CD4-positive, alpha-beta memory T cell (primary cell): ENCODE measurements at regions of chr13 and their contacts with region 1.

Region 1: DNA sequence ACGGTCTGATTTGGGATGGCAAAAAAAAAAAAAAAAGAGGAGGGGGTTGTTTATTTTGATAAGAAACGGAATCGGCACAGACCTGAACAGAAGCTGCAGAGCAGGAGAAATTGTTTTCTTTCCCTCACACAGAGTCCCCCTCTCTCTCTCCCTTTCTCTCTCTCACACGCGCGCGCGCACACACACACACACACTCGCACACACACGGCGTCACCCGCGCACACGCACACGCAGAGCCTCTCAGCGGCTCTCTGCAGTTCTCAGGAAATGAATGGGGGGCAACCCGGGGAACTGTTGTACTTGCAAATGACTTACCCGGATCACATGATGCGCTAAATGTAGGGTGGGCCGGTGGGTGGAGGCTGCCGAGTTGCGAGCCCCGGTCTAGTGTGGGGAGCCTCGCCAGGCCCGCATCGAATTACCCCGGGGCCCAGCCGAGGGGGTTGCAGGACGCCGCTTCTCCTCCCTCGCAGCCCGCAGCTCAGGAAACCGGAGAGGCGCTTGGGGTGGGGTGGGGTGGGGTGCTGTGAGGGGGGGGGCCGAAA is 475 bp downstream of the KLF12 start:
- DNase-seq: peak; percentile 89 to 98 (median 95)
- H3K4me3 ChIP-seq: peak overlapping the region; percentile 86 to 90
- H3K4me3 Mint-ChIP-seq: peak overlapping the region; percentile 96 to 100 (median 98)
- H3K27ac ChIP-seq: peak overlapping the region; percentile 94
- H3K27ac Mint-ChIP-seq: peak overlapping the region; percentile 97 to 100 (median 99)
- H3K4me1 ChIP-seq: peaks cover 41% of the 10 kb centered on the region
- H3K4me1 Mint-ChIP-seq: peaks cover 22 to 49% (median 28%) of the 10 kb centered on the region in 4 donors
- H3K27me3 ChIP-seq: no peaks in the 10 kb centered on the region
- H3K27me3 Mint-ChIP-seq: peaks cover 1 to 3% of the 10 kb centered on the region in 2 donors

Region 2: DNA sequence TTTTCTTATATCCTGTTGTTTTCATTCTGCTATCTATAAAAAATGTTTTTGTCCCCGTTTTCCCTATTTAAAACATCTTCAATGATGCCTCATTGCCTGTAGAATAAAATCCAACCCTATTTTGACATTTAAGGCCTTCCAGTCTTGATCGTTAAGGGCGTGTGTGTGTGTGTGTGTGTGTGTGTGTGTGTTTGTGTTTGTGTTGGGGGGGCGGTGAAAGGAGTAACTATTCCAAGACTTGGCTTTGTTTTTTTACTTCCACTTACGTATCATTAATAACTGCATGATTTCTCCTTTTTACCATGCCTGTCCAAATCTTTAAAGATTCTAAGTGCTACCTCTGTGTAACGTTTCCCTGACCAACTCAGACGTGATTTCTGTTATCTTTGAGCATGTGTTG is 1351.0 kb before region 1 on chr13:
- CTCF ChIA-PET with region 1: no interaction called
- POLR2A ChIA-PET with region 1: no interaction called
- intact Hi-C with region 1: no loop called
- DNase-seq: peak in 4 of 5 donors; percentile 1 to 39 (median 14)
- H3K4me3 ChIP-seq: peak overlapping the region; percentile 92 to 96
- H3K4me3 Mint-ChIP-seq: peak overlapping the region; percentile 99 to 100 (median 100)
- H3K27ac ChIP-seq: peak overlapping the region; percentile 84
- H3K27ac Mint-ChIP-seq: peak overlapping the region; percentile 90 to 100 (median 99)
- H3K4me1 ChIP-seq: peaks cover 73% of the 10 kb centered on the region
- H3K4me1 Mint-ChIP-seq: peaks cover 39 to 78% (median 59%) of the 10 kb centered on the region in 4 donors
- H3K27me3 ChIP-seq: no peaks in the 10 kb centered on the region
- H3K27me3 Mint-ChIP-seq: no peaks in the 10 kb centered on the region

Region 3: GRCh38 chr13:73765651-73766384 is 367.9 kb before region 1 on chr13:
- CTCF ChIA-PET with region 1: no interaction called
- POLR2A ChIA-PET with region 1: interaction called, 31 read pairs
- intact Hi-C with region 1: loop called (anchors 2 kb)
- DNase-seq: peak; percentile 73 to 93 (median 78)
- H3K4me3 ChIP-seq: peak overlapping the region; percentile 14 to 40
- H3K4me3 Mint-ChIP-seq: peak overlapping the region; percentile 78 to 92 (median 84)
- H3K27ac ChIP-seq: peak overlapping the region; percentile 47
- H3K27ac Mint-ChIP-seq: peak overlapping the region; percentile 96 to 99 (median 96)
- H3K4me1 ChIP-seq: peaks cover 84% of the 10 kb centered on the region
- H3K4me1 Mint-ChIP-seq: peaks cover 72 to 86% (median 80%) of the 10 kb centered on the region in 4 donors
- H3K27me3 ChIP-seq: no peaks in the 10 kb centered on the region
- H3K27me3 Mint-ChIP-seq: no peaks in the 10 kb centered on the region

Region 4: DNA sequence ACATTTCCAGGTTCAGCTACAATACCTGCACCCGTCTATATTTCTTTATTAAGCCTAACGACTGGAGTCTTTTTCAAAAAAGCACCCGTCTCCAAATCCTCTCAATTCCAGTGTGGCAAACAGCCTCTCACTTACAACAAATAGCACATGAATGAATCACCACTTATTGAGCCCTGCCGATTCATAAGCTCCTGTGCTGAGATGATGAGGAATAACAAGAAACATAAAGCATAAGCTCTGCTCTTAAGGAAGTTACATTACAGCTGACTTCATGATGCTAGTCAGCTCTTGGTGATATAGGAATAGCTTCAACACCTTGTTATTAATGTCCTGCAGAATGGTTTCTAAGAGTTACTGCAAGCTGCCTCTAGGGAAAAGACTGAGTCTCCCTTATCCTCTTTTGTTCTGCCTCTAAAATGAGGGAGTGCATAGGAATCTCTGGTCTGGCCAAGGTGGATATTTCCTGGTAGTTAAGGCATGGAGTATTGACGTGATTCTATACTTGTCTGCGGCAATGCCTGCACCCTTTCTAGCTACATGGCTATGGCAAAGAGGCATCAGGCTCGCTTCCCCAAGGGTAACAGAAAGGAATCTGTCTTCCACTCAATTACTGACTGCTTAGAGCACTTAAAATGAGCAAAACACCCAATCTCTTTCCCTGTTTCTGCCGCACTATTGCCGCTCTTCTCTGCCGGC is 195.2 kb before region 1 on chr13:
- CTCF ChIA-PET with region 1: no interaction called
- POLR2A ChIA-PET with region 1: interaction called, 5 read pairs
- intact Hi-C with region 1: loop called (anchors 5 kb)
- DNase-seq: no peak
- H3K4me3 ChIP-seq: no peak overlapping the region
- H3K4me3 Mint-ChIP-seq: no peak overlapping the region
- H3K27ac ChIP-seq: no peak overlapping the region
- H3K27ac Mint-ChIP-seq: peak overlapping the region in 4 of 7 donors; percentile 8 to 46 (median 28)
- H3K4me1 ChIP-seq: peaks cover 44% of the 10 kb centered on the region
- H3K4me1 Mint-ChIP-seq: peaks cover 61 to 88% (median 76%) of the 10 kb centered on the region in 4 donors
- H3K27me3 ChIP-seq: no peaks in the 10 kb centered on the region
- H3K27me3 Mint-ChIP-seq: no peaks in the 10 kb centered on the region

Region 5: DNA sequence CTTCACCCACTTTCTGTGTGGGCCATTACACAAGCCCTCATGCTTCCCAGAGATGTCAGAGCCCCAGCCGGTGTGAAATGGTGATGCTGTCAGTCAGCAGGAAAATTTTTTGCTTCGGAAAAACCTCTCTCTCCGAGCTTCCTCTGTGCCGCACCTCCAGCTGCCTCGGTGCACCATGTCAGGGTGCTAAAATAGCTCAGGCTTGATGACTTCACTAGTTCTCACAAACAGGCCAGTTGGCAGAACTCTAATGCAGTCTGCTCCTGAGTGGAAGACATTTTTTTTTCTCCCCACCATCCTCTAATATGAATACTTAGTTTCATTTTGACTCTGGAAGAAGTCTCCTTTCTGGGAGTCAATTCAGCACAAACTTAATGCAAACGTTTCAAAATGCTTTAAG is 70.8 kb before region 1 on chr13:
- CTCF ChIA-PET with region 1: interaction called, 13 read pairs
- POLR2A ChIA-PET with region 1: interaction called, 52 read pairs
- intact Hi-C with region 1: loop called (anchors 1 kb)
- DNase-seq: peak in 1 of 5 donors; percentile 70
- H3K4me3 ChIP-seq: peak overlapping the region in 1 of 2 donors; percentile 7
- H3K4me3 Mint-ChIP-seq: peak overlapping the region; percentile 57 to 93 (median 83)
- H3K27ac ChIP-seq: peak overlapping the region; percentile 48
- H3K27ac Mint-ChIP-seq: peak overlapping the region; percentile 81 to 98 (median 93)
- H3K4me1 ChIP-seq: peaks cover 93% of the 10 kb centered on the region
- H3K4me1 Mint-ChIP-seq: peaks cover 59 to 93% (median 86%) of the 10 kb centered on the region in 4 donors
- H3K27me3 ChIP-seq: no peaks in the 10 kb centered on the region
- H3K27me3 Mint-ChIP-seq: no peaks in the 10 kb centered on the region

Region 6: DNA sequence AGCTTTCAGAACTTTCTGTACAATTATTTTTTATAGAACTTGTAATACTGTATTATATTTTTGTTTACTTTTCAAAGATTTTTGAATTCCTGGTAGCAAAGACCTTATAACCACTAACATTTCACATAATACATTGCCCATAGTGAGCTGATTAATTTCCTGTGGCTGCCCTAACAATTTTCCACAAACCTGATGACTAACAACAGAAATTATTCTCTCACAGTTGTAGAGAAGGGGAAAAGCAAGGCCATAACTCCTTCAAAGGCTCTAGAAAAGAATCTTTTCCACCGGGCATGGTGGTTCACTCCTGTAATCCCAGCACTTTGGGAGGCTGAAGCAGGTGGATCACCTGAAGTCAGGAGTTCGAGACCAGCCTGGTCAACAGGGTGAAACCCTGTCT is 18.6 kb before region 1 on chr13:
- CTCF ChIA-PET with region 1: no interaction called
- POLR2A ChIA-PET with region 1: interaction called, 5 read pairs
- intact Hi-C with region 1: loop called (anchors 2 kb)
- DNase-seq: no peak
- H3K4me3 ChIP-seq: no peak overlapping the region
- H3K4me3 Mint-ChIP-seq: peak overlapping the region in 3 of 8 donors; percentile 15 to 67 (median 26)
- H3K27ac ChIP-seq: no peak overlapping the region
- H3K27ac Mint-ChIP-seq: peak overlapping the region in 2 of 7 donors; percentile 6 to 33
- H3K4me1 ChIP-seq: peaks cover 65% of the 10 kb centered on the region
- H3K4me1 Mint-ChIP-seq: peaks cover 44 to 76% (median 64%) of the 10 kb centered on the region in 4 donors
- H3K27me3 ChIP-seq: no peaks in the 10 kb centered on the region
- H3K27me3 Mint-ChIP-seq: no peaks in the 10 kb centered on the region

Region 7: DNA sequence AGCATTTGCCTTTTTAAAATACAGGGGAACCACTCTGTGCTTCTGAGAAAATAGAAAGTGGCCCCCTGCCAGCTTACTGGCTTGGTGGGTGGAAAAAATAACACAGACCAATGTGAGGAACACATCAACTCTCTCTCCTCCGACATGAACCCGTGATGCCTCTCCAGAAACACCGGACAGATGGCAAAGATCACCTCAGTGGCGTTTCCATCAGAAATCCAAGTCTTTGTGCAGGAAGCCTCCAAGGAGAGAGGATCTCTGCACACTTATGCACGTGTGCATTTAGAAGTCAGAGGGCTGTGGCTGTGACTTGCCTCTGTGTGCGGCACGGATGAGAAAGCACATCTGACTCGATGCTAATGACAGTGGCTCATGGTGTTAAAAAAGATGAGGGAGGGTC is 112.8 kb after region 1 on chr13:
- CTCF ChIA-PET with region 1: interaction called, 3 read pairs
- POLR2A ChIA-PET with region 1: interaction called, 115 read pairs
- intact Hi-C with region 1: loop called (anchors 1 kb)
- DNase-seq: peak in 2 of 5 donors; percentile 26 to 56
- H3K4me3 ChIP-seq: no peak overlapping the region
- H3K4me3 Mint-ChIP-seq: peak overlapping the region; percentile 53 to 84 (median 69)
- H3K27ac ChIP-seq: peak overlapping the region; percentile 54
- H3K27ac Mint-ChIP-seq: peak overlapping the region; percentile 87 to 97 (median 94)
- H3K4me1 ChIP-seq: peaks cover 96% of the 10 kb centered on the region
- H3K4me1 Mint-ChIP-seq: peaks cover 79 to 100% (median 91%) of the 10 kb centered on the region in 4 donors
- H3K27me3 ChIP-seq: no peaks in the 10 kb centered on the region
- H3K27me3 Mint-ChIP-seq: no peaks in the 10 kb centered on the region